Right cardiac atrium (tissue), 5 donors: ENCODE measurements at regions of chr7 and their contacts with region 1.

Region 1: DNA sequence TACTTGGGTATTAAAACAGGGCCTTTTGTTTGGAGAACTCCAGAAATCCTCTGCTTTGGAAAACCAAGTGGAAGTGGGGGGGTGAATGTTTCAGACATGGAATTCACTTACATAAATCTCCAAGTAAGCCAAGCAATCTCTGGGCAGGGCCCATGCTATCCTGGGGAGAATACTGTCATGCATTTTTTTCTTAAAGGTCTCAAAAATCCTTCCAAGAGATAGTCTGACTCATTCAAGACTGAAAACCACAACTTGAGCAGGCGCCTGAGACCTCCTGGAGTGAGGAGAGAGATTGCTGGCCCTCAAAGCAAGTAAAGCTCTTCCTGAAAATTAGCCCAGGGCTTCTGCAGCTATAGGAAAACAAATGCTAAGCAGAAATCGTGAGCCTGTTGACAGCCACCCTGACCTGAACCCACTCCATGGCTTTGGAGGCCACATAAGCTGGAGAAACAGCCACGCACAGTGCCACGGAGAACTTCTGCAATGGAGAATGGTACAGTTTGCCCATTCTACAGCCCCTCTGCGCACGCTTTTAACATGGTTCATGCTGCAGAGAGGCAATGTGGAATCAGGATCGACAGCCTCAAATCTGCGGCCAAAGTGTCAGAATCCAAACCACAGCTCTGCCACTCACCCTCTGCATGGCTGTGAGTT is 203.1 kb upstream of the AUTS2 start:
- DNase-seq: peak in 2 of 3 donors; percentile 33 to 53
- ATAC-seq: peak; percentile 35 to 76
- H3K4me3 ChIP-seq: no peak overlapping the region
- H3K27ac ChIP-seq: no peak overlapping the region
- H3K4me1 ChIP-seq: peaks cover 3% of the 10 kb centered on the region
- H3K27me3 ChIP-seq: no peaks in the 10 kb centered on the region

Region 2: DNA sequence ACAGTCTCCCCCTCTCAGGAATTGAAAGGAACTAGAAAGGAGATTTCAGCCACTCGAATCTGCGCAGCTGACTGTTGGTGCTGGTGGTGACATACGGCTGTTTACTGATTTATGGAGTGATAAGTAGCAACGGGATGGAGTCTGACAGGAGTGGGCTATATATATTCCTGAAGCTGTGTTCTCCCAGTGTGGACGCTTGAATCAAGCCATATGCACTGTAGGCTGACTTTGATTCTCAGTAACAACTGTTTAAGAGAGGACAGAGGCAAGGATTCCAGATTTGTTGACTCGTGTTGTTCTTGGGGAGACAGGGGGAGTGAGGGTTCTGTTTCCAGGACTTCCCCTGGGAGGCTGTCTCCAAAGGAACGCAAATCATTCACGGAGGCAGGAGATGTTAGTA is 57.0 kb before region 1 on chr7:
- intact Hi-C with region 1: loop called in 1 of 4 experiments (anchors 10 kb)
- DNase-seq: no peak
- ATAC-seq: no peak
- H3K4me3 ChIP-seq: no peak overlapping the region
- H3K27ac ChIP-seq: no peak overlapping the region
- H3K4me1 ChIP-seq: no peaks in the 10 kb centered on the region
- H3K27me3 ChIP-seq: no peaks in the 10 kb centered on the region

Region 3: GRCh38 chr7:69373171-69374043 is 21.8 kb before region 1 on chr7:
- intact Hi-C with region 1: no loop called
- DNase-seq: no peak
- ATAC-seq: no peak
- H3K4me3 ChIP-seq: no peak overlapping the region
- H3K27ac ChIP-seq: no peak overlapping the region
- H3K4me1 ChIP-seq: peaks cover 2% of the 10 kb centered on the region
- H3K27me3 ChIP-seq: no peaks in the 10 kb centered on the region